ENCODE measurements at regions of chr12 and their contacts with region 1.

Region 1: GRCh38 chr12:57441846-57442427 is 7.4 kb downstream of the INHBC start:
- DNase-seq: no peak
- H3K4me3 ChIP-seq: no peak overlapping the region
- H3K27ac ChIP-seq: no peak overlapping the region
- H3K4me1 ChIP-seq: no peaks in the 10 kb centered on the region
- H3K27me3 ChIP-seq: no peaks in the 10 kb centered on the region
- CTCF ChIP-seq: no peak
- EP300 ChIP-seq: no peak
- POLR2A ChIP-seq: no peak

Region 2: GRCh38 chr12:57299514-57300016 is 142.4 kb before region 1 on chr12:
- in situ Hi-C with region 1: loop called in 3 of 4 experiments (anchors 10 to 25 kb)
- intact Hi-C with region 1: no loop called
- DNase-seq: no peak
- H3K4me3 ChIP-seq: no peak overlapping the region
- H3K27ac ChIP-seq: no peak overlapping the region
- H3K4me1 ChIP-seq: no peaks in the 10 kb centered on the region
- H3K27me3 ChIP-seq: no peaks in the 10 kb centered on the region
- CTCF ChIP-seq: no peak
- EP300 ChIP-seq: no peak
- POLR2A ChIP-seq: no peak

Measured in transverse colon (tissue), 4 donors.